ENCODE measurements at regions of chr4 and their contacts with region 1.

Region 1: DNA sequence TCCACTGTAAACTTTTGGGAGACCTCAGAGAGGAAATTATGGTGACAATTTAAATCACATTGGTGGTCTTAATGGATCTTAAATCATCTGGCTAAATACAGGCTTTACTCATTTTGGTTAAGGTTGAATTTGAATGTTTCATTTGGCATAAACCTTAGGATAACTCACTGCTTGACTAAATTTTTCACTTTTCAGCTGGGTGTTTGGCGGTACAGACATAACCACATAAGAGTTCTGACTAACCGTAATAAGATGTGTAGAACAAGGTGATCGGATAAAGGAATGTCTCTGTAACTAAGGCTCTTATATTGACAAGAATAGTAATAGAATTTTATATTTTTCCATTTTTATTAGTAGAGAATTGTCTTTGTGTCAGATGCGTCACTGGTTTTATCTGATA is 281.0 kb downstream of the BMPR1B start:
- DNase-seq: no peak
- H3K4me3 ChIP-seq: no peak overlapping the region
- H3K27ac ChIP-seq: no peak overlapping the region
- H3K4me1 ChIP-seq: no peaks in the 10 kb centered on the region
- H3K27me3 ChIP-seq: no peaks in the 10 kb centered on the region
- CTCF ChIP-seq: no peak
- EP300 ChIP-seq: no peak
- POLR2A ChIP-seq: no peak

Region 2: GRCh38 chr4:95017305-95018064 is 21.3 kb before region 1 on chr4:
- in situ Hi-C with region 1: no loop called
- intact Hi-C with region 1: loop called (anchors 1 kb)
- DNase-seq: no peak
- H3K4me3 ChIP-seq: no peak overlapping the region
- H3K27ac ChIP-seq: no peak overlapping the region
- H3K4me1 ChIP-seq: no peaks in the 10 kb centered on the region
- H3K27me3 ChIP-seq: no peaks in the 10 kb centered on the region
- CTCF ChIP-seq: no peak
- EP300 ChIP-seq: no peak
- POLR2A ChIP-seq: no peak

Region 3: GRCh38 chr4:95091272-95091671 is 52.5 kb after region 1 on chr4:
- in situ Hi-C with region 1: no loop called
- intact Hi-C with region 1: no loop called
- DNase-seq: no peak
- H3K4me3 ChIP-seq: no peak overlapping the region
- H3K27ac ChIP-seq: no peak overlapping the region
- H3K4me1 ChIP-seq: peaks cover 0 to 14% (median 0%) of the 10 kb centered on the region in 4 donors
- H3K27me3 ChIP-seq: no peaks in the 10 kb centered on the region
- CTCF ChIP-seq: no peak
- EP300 ChIP-seq: no peak
- POLR2A ChIP-seq: no peak